ENCODE measurements at regions of chr13 and their contacts with region 1.

Region 1: DNA sequence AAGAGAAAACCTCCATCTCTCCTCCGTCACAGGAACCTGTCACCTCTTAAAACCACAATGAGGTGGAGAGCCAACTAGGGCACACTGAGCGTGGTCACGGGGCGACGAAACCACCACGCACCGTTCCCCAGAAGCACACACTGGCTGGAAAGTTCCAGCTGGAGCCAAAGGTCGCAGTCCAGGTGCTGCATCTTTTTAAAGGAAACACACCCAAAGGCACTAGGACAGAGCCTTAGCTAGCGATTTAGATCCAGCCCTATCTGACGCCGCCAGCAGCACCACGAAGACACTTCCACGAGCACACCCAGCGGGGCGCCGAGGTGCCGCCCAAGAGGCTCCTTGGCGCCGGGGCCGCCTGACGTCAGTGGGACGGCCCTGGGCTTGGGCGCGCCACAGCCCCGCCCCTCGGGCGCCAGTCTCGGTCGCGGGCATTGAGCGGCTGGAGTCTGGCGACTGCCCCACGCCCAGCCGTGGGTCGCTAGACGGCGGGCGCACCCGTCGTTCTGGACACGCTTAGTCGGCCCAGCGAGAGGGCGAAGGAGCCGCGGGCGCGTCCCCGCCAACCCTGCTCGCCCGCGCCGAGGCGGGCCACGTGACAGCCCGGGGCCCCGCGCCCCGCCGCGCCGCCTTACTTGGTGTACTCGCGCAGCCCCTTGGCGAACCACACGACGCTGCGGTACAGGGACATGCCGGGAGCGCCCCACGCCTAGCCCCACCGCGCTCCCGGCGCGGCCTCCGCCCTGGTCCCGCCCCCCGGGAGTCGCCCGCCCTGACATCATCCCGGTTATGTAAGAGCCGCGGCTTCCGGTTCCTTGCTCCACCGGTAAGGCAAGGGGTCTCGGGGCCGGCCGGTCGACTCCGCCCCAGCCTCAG is at the start of gene DHRS12:
- DNase-seq: peak; percentile 83 to 93 (median 92)
- ATAC-seq: peak; percentile 83
- H3K4me3 ChIP-seq: peak within 1 kb of the TSS; percentile 81
- H3K4me3 Mint-ChIP-seq: peak within 1 kb of the TSS; percentile 84 to 99 (median 96)
- H3K27ac ChIP-seq: peak within 1 kb of the TSS; percentile 100
- H3K27ac Mint-ChIP-seq: peak within 1 kb of the TSS; percentile 99 to 100 (median 100)
- H3K4me1 ChIP-seq: peaks cover 29 to 32% of the 10 kb centered on the region in 2 donors
- H3K4me1 Mint-ChIP-seq: peaks cover 28 to 70% (median 52%) of the 10 kb centered on the region in 7 donors
- H3K27me3 ChIP-seq: no peaks in the 10 kb centered on the region
- H3K27me3 Mint-ChIP-seq: peaks cover 0 to 6% (median 0%) of the 10 kb centered on the region in 5 donors
- total RNA-seq, gene DHRS12: 6.7 to 25.3 (median 20.1) TPM

Region 2: GRCh38 chr13:50081679-50082425 is 1721.8 kb before region 1 on chr13:
- CTCF ChIA-PET with region 1: no interaction called
- POLR2A ChIA-PET with region 1: no interaction called
- intact Hi-C with region 1: loop called in 1 of 2 experiments (anchors 5 kb)
- DNase-seq: peak; percentile 94 to 99 (median 99)
- ATAC-seq: peak; percentile 88
- H3K4me3 ChIP-seq: peak overlapping the region; percentile 63
- H3K4me3 Mint-ChIP-seq: peak overlapping the region; percentile 90 to 100 (median 95)
- H3K27ac ChIP-seq: peak overlapping the region; percentile 86
- H3K27ac Mint-ChIP-seq: peak overlapping the region; percentile 88 to 99 (median 94)
- H3K4me1 ChIP-seq: peaks cover 17% of the 10 kb centered on the region in 2 donors
- H3K4me1 Mint-ChIP-seq: peaks cover 13 to 63% (median 49%) of the 10 kb centered on the region in 7 donors
- H3K27me3 ChIP-seq: peaks cover 0 to 8% of the 10 kb centered on the region in 2 donors
- H3K27me3 Mint-ChIP-seq: peaks cover 0 to 11% (median 7%) of the 10 kb centered on the region in 5 donors

Region 3: GRCh38 chr13:51286135-51287002 is 517.3 kb before region 1 on chr13:
- CTCF ChIA-PET with region 1: interaction called, 4 read pairs
- POLR2A ChIA-PET with region 1: no interaction called
- intact Hi-C with region 1: loop called in 1 of 2 experiments (anchors 2 kb)
- DNase-seq: peak; percentile 11 to 77 (median 46)
- ATAC-seq: peak; percentile 76
- H3K4me3 ChIP-seq: no peak overlapping the region
- H3K4me3 Mint-ChIP-seq: no peak overlapping the region
- H3K27ac ChIP-seq: no peak overlapping the region
- H3K27ac Mint-ChIP-seq: no peak overlapping the region
- H3K4me1 ChIP-seq: no peaks in the 10 kb centered on the region
- H3K4me1 Mint-ChIP-seq: peaks cover 0 to 25% (median 0%) of the 10 kb centered on the region in 7 donors
- H3K27me3 ChIP-seq: no peaks in the 10 kb centered on the region
- H3K27me3 Mint-ChIP-seq: peaks cover 0 to 9% (median 0%) of the 10 kb centered on the region in 5 donors

Region 4: DNA sequence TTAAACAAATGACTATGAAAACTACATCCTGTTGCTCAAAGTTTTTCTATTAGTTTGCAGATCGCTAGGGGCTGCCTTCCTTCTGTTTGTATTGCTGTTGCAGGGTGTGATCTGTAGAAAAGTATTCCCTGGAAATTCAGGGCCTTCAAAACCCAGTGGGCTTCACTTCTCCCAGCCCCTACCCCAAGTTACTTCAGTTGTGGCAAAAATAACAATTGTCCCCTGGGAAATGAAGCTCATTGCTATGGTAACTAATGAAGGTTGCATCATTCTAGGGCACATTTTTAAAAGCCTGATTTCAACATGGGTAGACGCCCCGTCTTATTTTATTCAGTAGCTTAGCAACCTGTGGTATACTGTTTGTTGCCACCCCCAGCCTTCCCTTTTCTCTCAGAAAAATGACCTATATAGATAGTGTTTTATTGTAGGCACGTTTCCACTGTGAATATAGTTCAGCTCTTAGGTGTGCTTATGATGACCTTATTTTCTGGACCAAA is 158.5 kb before region 1 on chr13:
- CTCF ChIA-PET with region 1: no interaction called
- POLR2A ChIA-PET with region 1: no interaction called
- intact Hi-C with region 1: loop called in 1 of 2 experiments (anchors 10 kb)
- DNase-seq: peak in 8 of 9 donors; percentile 29 to 80 (median 70)
- ATAC-seq: peak; percentile 92
- H3K4me3 ChIP-seq: no peak overlapping the region
- H3K4me3 Mint-ChIP-seq: peak overlapping the region; percentile 43 to 77 (median 64)
- H3K27ac ChIP-seq: peak overlapping the region; percentile 61
- H3K27ac Mint-ChIP-seq: peak overlapping the region; percentile 72 to 97 (median 92)
- H3K4me1 ChIP-seq: peaks cover 26 to 39% of the 10 kb centered on the region in 2 donors
- H3K4me1 Mint-ChIP-seq: peaks cover 37 to 57% (median 49%) of the 10 kb centered on the region in 7 donors
- H3K27me3 ChIP-seq: no peaks in the 10 kb centered on the region
- H3K27me3 Mint-ChIP-seq: no peaks in the 10 kb centered on the region

Region 5: DNA sequence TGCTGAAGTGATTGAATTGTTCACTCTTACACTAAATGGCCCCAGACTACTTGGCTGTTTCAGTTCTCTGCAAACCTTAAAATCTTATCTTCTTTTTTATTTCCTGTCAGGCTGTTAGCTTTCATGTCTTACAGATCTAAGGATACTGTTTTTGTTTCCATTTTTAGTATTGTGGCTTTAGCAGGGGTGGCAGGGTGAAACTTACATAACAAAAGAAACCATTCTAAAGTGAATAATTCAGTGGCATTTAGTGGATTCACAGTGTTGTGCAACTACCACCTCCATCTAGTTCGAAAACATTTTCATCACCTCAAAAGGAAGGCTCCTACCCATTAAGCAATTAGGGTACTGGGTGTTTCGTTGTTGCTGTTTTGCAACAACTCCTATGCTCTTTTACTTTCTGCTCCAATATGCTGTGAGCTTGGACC is 21.5 kb after region 1 on chr13:
- CTCF ChIA-PET with region 1: interaction called, 14 read pairs
- POLR2A ChIA-PET with region 1: interaction called, 324 read pairs
- intact Hi-C with region 1: loop called (anchors 1 kb)
- DNase-seq: peak in 7 of 9 donors; percentile 62 to 90 (median 84)
- ATAC-seq: peak; percentile 81
- H3K4me3 ChIP-seq: peak overlapping the region; percentile 75
- H3K4me3 Mint-ChIP-seq: peak overlapping the region; percentile 62 to 100 (median 97)
- H3K27ac ChIP-seq: peak overlapping the region; percentile 85
- H3K27ac Mint-ChIP-seq: peak overlapping the region; percentile 86 to 99 (median 95)
- H3K4me1 ChIP-seq: peaks cover 61 to 78% of the 10 kb centered on the region in 2 donors
- H3K4me1 Mint-ChIP-seq: peaks cover 57 to 80% (median 63%) of the 10 kb centered on the region in 7 donors
- H3K27me3 ChIP-seq: no peaks in the 10 kb centered on the region
- H3K27me3 Mint-ChIP-seq: peaks cover 0 to 10% (median 0%) of the 10 kb centered on the region in 5 donors

Region 6: DNA sequence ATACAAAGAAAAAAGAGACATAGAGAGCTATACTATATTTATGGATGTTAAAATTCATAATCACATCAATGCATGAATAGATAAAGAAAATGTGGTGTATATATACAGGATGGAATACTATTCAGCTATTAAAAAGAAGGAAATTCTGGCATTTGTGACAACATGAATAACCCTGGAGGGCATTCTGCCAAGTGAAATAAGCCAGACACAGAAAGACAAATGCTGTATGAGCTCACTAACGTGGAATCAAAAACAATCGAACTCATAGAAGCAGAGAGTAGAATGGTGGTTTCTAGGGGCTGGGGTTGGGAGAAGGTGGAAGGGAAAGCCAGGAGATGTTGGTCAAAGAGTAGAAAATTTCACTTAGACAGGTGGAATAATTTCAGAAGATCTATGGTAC is 244.9 kb after region 1 on chr13:
- CTCF ChIA-PET with region 1: no interaction called
- POLR2A ChIA-PET with region 1: no interaction called
- intact Hi-C with region 1: no loop called
- DNase-seq: no peak
- ATAC-seq: no peak
- H3K4me3 ChIP-seq: no peak overlapping the region
- H3K4me3 Mint-ChIP-seq: no peak overlapping the region
- H3K27ac ChIP-seq: no peak overlapping the region
- H3K27ac Mint-ChIP-seq: no peak overlapping the region
- H3K4me1 ChIP-seq: no peaks in the 10 kb centered on the region
- H3K4me1 Mint-ChIP-seq: no peaks in the 10 kb centered on the region
- H3K27me3 ChIP-seq: no peaks in the 10 kb centered on the region
- H3K27me3 Mint-ChIP-seq: peaks cover 0 to 15% (median 0%) of the 10 kb centered on the region in 5 donors

Region 7: DNA sequence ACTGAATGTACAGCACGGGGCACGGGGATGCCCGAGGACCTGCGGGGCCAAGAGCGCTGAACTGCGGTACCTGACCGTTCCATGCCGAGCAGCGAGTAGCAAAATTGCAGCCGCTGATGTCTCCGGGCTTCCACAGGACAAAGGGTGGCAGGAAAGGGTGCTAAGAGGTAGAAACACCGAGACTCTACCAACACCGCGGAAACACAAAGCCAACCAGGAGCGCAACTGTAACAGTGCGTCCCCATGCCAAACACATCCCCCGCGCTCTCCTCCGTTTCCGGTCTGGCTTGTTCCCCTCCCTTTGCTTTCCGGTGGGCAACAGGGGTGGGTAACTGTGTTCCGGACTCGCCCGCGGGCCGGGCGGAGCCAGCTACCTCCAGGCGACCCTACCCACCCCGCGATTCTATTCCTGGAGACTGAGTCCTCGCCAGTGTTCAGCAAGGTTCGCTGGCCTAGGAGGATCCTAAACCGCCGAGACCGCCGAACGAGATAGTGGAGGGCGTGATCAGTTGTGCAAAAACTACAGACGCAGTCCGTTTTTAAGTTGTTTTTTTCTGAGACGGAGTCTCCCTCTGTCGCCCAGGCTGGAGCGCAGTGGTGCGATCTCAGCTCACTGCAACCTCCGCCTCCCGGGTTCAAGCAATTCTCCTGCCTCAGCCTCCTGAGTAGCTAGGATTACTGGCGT is 390.7 kb after region 1 on chr13:
- CTCF ChIA-PET with region 1: no interaction called
- POLR2A ChIA-PET with region 1: interaction called, 4 read pairs
- intact Hi-C with region 1: loop called in 1 of 2 experiments (anchors 1 kb)
- DNase-seq: peak; percentile 77 to 92 (median 84)
- ATAC-seq: peak; percentile 94
- H3K4me3 ChIP-seq: peak overlapping the region; percentile 67
- H3K4me3 Mint-ChIP-seq: peak overlapping the region; percentile 88 to 99 (median 98)
- H3K27ac ChIP-seq: peak overlapping the region; percentile 78
- H3K27ac Mint-ChIP-seq: peak overlapping the region; percentile 90 to 98 (median 95)
- H3K4me1 ChIP-seq: no peaks in the 10 kb centered on the region
- H3K4me1 Mint-ChIP-seq: peaks cover 15 to 42% (median 37%) of the 10 kb centered on the region in 7 donors
- H3K27me3 ChIP-seq: no peaks in the 10 kb centered on the region
- H3K27me3 Mint-ChIP-seq: peaks cover 0 to 3% (median 0%) of the 10 kb centered on the region in 5 donors

Region 8: DNA sequence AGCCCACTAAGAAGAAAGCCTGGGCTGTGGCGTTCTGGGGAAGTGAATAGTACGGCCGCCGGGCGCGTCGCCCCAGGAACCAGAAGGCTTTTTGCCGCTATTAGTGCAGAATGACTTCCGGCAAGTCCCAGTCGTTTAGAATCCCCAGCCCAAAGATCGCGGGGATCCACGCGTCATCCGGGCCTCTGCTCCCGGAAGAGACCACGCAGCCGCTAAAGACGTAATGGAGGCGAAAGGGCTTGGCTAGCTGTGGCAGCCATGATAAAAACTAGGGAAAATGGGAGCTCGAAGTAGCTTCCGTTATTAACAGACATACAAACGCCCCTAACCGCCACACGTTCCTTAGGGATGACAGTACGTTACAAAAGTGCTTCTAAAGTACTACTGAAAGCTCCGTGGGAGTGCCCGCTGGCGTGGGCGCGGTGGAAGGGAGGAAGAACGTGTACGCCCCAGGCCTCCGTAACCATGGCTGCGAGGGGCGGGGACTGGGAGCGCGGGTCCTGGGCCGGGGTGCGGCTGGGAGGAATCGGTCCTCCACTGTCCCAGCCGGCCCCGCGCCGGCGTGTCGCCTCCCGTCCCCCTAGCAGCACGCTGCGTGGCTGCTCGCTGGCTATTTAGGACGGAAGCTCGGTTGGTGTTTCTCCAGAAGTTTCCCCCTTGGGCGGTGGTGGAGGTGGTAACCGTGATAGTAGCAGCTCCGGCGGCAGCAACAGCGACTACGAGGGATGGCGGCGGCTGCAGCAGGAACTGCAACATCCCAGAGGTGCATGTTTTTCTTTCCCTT is 848.7 kb after region 1 on chr13 and contains the start of gene SUGT1:
- CTCF ChIA-PET with region 1: no interaction called
- POLR2A ChIA-PET with region 1: no interaction called
- intact Hi-C with region 1: loop called (anchors 1 kb)
- DNase-seq: peak; percentile 90 to 97 (median 95)
- ATAC-seq: peak; percentile 96
- H3K4me3 ChIP-seq: peak within 1 kb of the TSS; percentile 87
- H3K4me3 Mint-ChIP-seq: no peak within 1 kb of the TSS
- H3K27ac ChIP-seq: peak within 1 kb of the TSS; percentile 94
- H3K27ac Mint-ChIP-seq: no peak within 1 kb of the TSS
- H3K4me1 ChIP-seq: peaks cover 17 to 22% of the 10 kb centered on the region in 2 donors
- H3K4me1 Mint-ChIP-seq: peaks cover 6 to 18% (median 13%) of the 10 kb centered on the region in 7 donors
- H3K27me3 ChIP-seq: no peaks in the 10 kb centered on the region
- H3K27me3 Mint-ChIP-seq: no peaks in the 10 kb centered on the region
- total RNA-seq, gene SUGT1: 21.3 to 49.0 (median 33.8) TPM

Measured in naive thymus-derived CD4-positive, alpha-beta T cell (primary cell).